Activated B cell treated with CpG ODN at 0.5 μM for 24 hours (primary cell): ENCODE measurements at regions of chr3 and their contacts with region 1.

Region 1: GRCh38 chr3:12663936-12664908 is at the start of gene RAF1:
- DNase-seq: peak; percentile 96
- ATAC-seq: peak; percentile 94
- H3K4me3 Mint-ChIP-seq: peak within 1 kb of the TSS; percentile 98
- H3K27ac Mint-ChIP-seq: peak within 1 kb of the TSS; percentile 98
- H3K4me1 Mint-ChIP-seq: peaks cover 37% of the 10 kb centered on the region
- H3K27me3 Mint-ChIP-seq: no peaks in the 10 kb centered on the region
- CTCF ChIP-seq: no peak
- total RNA-seq, gene RAF1: 89.9 and 103 TPM in 2 replicates

Region 2: DNA sequence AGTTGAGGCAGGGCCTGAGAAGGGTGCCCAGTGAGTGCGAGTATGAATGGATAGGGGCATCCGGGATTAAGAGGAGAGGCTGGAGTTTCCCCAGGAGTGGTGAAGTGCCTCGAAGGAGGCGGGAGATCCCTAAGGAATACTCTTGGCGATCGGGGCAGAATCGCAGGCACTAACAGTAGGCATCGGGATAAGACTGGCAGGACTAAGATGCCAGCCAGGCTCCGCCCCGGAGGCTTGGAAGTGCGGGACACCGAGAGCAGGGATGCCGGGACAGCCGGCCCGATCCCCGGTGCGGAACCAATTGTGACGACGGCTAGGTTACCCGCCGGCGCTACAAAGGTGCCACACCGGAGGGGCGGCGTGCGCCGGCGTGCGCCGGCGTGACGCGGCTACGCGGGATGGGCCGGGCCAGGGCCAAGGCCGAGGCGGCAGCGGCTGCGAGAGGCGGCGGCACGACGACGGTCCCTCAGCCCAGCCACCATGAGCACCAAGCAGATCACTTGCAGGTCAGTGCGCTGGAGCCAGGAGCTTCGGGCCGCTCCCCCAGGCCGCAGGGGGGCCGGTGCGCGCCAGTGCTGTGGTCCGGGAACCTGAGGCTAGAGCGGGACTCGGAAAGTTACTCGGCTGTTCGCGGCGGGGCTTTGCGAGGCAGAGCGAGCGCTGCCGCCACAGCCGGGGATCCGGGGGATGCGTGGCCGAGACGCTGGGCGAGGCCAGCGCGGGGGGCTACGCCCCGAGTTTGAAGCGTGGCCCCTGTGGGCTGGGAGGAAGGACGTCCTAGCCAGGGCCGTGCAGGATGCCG is 107.3 kb before region 1 on chr3 and contains the start of gene MKRN2:
- CTCF ChIA-PET with region 1: no interaction called
- POLR2A ChIA-PET with region 1: interaction called, 4 read pairs
- intact Hi-C with region 1: loop called (anchors 1 kb)
- DNase-seq: peak; percentile 85
- ATAC-seq: peak; percentile 96
- H3K4me3 Mint-ChIP-seq: peak within 1 kb of the TSS; percentile 89
- H3K27ac Mint-ChIP-seq: peak within 1 kb of the TSS; percentile 62
- H3K4me1 Mint-ChIP-seq: peaks cover 62% of the 10 kb centered on the region
- H3K27me3 Mint-ChIP-seq: peaks cover 9% of the 10 kb centered on the region
- CTCF ChIP-seq: no peak
- total RNA-seq, gene MKRN2: 22.2 and 22.3 TPM in 2 replicates

Region 3: GRCh38 chr3:12706504-12707253 is 42.5 kb after region 1 on chr3:
- CTCF ChIA-PET with region 1: no interaction called
- POLR2A ChIA-PET with region 1: no interaction called
- intact Hi-C with region 1: no loop called
- DNase-seq: peak; percentile 24
- ATAC-seq: peak; percentile 98
- H3K4me3 Mint-ChIP-seq: no peak overlapping the region
- H3K27ac Mint-ChIP-seq: no peak overlapping the region
- H3K4me1 Mint-ChIP-seq: no peaks in the 10 kb centered on the region
- H3K27me3 Mint-ChIP-seq: peaks cover 3% of the 10 kb centered on the region
- CTCF ChIP-seq: no peak

Region 4: GRCh38 chr3:12796171-12797123 is 132.2 kb after region 1 on chr3 and contains the start of gene CAND2:
- CTCF ChIA-PET with region 1: no interaction called
- POLR2A ChIA-PET with region 1: interaction called, 12 read pairs
- intact Hi-C with region 1: no loop called
- DNase-seq: peak; percentile 46
- ATAC-seq: peak; percentile 78
- H3K4me3 Mint-ChIP-seq: peak within 1 kb of the TSS; percentile 87
- H3K27ac Mint-ChIP-seq: no peak within 1 kb of the TSS
- H3K4me1 Mint-ChIP-seq: peaks cover 20% of the 10 kb centered on the region
- H3K27me3 Mint-ChIP-seq: peaks cover 3% of the 10 kb centered on the region
- CTCF ChIP-seq: no peak
- total RNA-seq, gene CAND2: 0.22 and 0.42 TPM in 2 replicates

Region 5: GRCh38 chr3:12967606-12968351 is 303.6 kb after region 1 on chr3:
- CTCF ChIA-PET with region 1: no interaction called
- POLR2A ChIA-PET with region 1: no interaction called
- intact Hi-C with region 1: loop called (anchors 5 kb)
- DNase-seq: peak; percentile 77
- ATAC-seq: peak; percentile 96
- H3K4me3 Mint-ChIP-seq: peak overlapping the region; percentile 72
- H3K27ac Mint-ChIP-seq: peak overlapping the region; percentile 20
- H3K4me1 Mint-ChIP-seq: peaks cover 86% of the 10 kb centered on the region
- H3K27me3 Mint-ChIP-seq: no peaks in the 10 kb centered on the region
- CTCF ChIP-seq: no peak

Region 6: GRCh38 chr3:14651440-14652251 is 1987.4 kb after region 1 on chr3 and contains the start of gene CCDC174:
- CTCF ChIA-PET with region 1: no interaction called
- POLR2A ChIA-PET with region 1: interaction called, 6 read pairs
- intact Hi-C with region 1: loop called (anchors 2 kb)
- DNase-seq: peak; percentile 86
- ATAC-seq: peak; percentile 97
- H3K4me3 Mint-ChIP-seq: peak within 1 kb of the TSS; percentile 95
- H3K27ac Mint-ChIP-seq: peak within 1 kb of the TSS; percentile 93
- H3K4me1 Mint-ChIP-seq: peaks cover 34% of the 10 kb centered on the region
- H3K27me3 Mint-ChIP-seq: no peaks in the 10 kb centered on the region
- CTCF ChIP-seq: no peak
- total RNA-seq, gene CCDC174: 30.2 and 32.4 TPM in 2 replicates